ENCODE measurements at regions of chr2 and their contacts with region 1.

Region 1: GRCh38 chr2:207334624-207335371 is 169.1 kb upstream of the KLF7 start:
- DNase-seq: peak; percentile 97
- H3K4me3 Mint-ChIP-seq: peak overlapping the region; percentile 70
- H3K27ac Mint-ChIP-seq: peak overlapping the region; percentile 98
- H3K4me1 Mint-ChIP-seq: peaks cover 58% of the 10 kb centered on the region
- H3K27me3 Mint-ChIP-seq: no peaks in the 10 kb centered on the region
- CTCF ChIP-seq: no peak

Region 2: DNA sequence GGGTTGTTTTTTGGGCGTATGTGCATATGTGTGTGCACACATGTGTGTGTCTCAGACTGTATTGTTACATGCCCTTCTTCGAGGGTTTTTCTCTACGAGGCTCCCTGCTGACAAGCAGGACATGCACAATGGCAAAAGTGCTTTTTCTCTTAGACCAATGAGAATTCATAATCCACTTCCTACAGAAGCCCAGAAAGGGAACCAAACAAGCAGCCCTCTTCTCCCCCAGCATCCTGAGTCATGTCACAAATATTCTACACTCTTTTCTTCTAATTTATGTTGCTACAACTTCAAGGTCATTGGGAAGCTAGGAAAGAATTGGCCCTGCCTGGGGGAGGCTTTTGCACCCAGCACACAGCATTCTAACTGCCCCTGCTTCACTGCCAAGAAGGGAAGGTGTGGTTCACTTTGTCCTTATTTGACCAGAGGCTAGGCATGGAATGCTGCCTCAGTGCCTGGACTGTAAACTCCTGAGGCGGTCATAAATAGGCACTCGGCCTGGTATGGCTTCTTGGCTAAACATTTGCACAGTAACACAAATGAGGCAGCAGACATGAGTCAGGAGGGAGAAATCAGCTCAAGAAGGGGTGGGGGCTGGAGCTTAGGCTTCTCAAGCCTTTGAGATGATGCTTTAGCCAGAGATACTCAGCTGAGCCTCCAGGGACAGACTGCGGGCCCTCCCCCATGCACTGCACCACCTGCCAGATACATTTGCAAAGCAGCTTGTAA is 76.4 kb before region 1 on chr2:
- CTCF ChIA-PET with region 1: no interaction called
- POLR2A ChIA-PET with region 1: interaction called, 37 read pairs
- intact Hi-C with region 1: loop called (anchors 2 kb)
- DNase-seq: peak; percentile 91
- H3K4me3 Mint-ChIP-seq: peak overlapping the region; percentile 26
- H3K27ac Mint-ChIP-seq: peak overlapping the region; percentile 84
- H3K4me1 Mint-ChIP-seq: peaks cover 65% of the 10 kb centered on the region
- H3K27me3 Mint-ChIP-seq: no peaks in the 10 kb centered on the region
- CTCF ChIP-seq: no peak

Region 3: GRCh38 chr2:207317378-207317984 is 17.3 kb before region 1 on chr2:
- CTCF ChIA-PET with region 1: interaction called, 3 read pairs
- POLR2A ChIA-PET with region 1: interaction called, 7 read pairs
- intact Hi-C with region 1: loop called (anchors 2 kb)
- DNase-seq: peak; percentile 89
- H3K4me3 Mint-ChIP-seq: no peak overlapping the region
- H3K27ac Mint-ChIP-seq: no peak overlapping the region
- H3K4me1 Mint-ChIP-seq: peaks cover 28% of the 10 kb centered on the region
- H3K27me3 Mint-ChIP-seq: no peaks in the 10 kb centered on the region
- CTCF ChIP-seq: no peak

Region 4: DNA sequence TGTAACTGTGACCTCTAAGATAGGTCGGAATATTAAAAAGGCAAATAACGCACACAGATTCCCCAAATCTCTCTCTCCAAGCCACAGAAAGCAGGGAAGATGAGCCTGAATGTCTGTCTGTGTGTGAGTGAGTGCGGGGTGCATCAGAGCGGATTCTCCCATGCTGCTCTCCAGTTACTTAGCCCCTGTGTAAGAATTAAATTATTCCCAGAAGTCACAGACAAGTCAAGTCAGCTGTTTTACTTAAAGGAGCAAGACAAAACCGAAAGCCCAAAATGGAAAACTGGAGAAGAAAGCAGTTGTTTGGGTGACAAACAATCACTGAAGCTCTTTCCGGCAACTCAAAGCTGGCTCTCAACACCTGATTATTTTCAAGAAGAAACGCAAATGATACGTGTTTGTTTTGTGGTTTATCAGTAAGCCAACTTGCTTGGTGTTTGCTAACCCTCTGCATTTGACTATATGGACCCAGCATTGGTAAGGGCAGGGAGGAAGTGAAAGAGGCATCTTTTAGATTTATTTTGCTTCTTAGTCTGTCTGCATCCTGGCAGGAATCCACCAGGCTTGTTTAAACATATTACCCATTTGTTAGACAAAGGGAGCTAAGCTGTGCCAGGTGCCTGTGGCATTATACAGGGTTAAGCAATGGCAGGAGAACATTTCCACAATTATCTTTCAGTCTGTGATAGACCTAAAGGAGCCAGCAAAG is 73.4 kb after region 1 on chr2:
- CTCF ChIA-PET with region 1: interaction called, 4 read pairs
- POLR2A ChIA-PET with region 1: interaction called, 18 read pairs
- intact Hi-C with region 1: no loop called
- DNase-seq: peak; percentile 95
- H3K4me3 Mint-ChIP-seq: no peak overlapping the region
- H3K27ac Mint-ChIP-seq: no peak overlapping the region
- H3K4me1 Mint-ChIP-seq: peaks cover 21% of the 10 kb centered on the region
- H3K27me3 Mint-ChIP-seq: no peaks in the 10 kb centered on the region
- CTCF ChIP-seq: no peak

Measured in MCF 10A (cell line).